Breast epithelium (tissue), 4 donors: ENCODE measurements at regions of chr9 and their contacts with region 1.

Region 1: DNA sequence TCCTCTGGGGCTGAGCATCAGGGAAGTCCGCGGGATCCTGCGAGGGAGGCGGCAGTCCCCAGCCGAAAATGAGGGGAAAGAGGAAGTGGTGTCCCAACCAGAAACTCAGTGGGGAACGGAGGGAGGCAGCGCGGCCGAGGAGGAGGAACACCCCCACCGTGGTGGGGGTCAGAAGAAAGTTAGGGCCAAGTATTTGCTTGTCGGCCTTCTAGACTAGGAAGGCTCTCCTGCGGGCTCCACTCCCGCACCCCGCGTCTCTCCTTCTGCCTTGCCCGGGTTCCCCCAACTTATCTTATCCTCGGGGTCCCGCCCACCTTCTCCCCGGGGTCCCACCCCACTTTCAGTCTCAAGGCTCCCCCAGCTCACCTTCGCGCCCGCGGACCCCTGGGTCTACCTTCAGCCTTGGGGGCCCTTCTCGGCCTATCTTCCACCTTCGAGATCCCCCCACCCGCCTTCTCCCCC is 557 bp upstream of the PHF2 start:
- DNase-seq: peak in 1 of 2 donors; percentile 50
- H3K4me3 ChIP-seq: peak overlapping the region; percentile 81 to 99 (median 90)
- H3K27ac ChIP-seq: peak overlapping the region; percentile 96 to 99
- H3K4me1 ChIP-seq: peaks cover 3 to 13% of the 10 kb centered on the region in 2 donors
- H3K27me3 ChIP-seq: no peaks in the 10 kb centered on the region
- CTCF ChIP-seq: no peak
- POLR2A ChIP-seq: no peak

Region 2: DNA sequence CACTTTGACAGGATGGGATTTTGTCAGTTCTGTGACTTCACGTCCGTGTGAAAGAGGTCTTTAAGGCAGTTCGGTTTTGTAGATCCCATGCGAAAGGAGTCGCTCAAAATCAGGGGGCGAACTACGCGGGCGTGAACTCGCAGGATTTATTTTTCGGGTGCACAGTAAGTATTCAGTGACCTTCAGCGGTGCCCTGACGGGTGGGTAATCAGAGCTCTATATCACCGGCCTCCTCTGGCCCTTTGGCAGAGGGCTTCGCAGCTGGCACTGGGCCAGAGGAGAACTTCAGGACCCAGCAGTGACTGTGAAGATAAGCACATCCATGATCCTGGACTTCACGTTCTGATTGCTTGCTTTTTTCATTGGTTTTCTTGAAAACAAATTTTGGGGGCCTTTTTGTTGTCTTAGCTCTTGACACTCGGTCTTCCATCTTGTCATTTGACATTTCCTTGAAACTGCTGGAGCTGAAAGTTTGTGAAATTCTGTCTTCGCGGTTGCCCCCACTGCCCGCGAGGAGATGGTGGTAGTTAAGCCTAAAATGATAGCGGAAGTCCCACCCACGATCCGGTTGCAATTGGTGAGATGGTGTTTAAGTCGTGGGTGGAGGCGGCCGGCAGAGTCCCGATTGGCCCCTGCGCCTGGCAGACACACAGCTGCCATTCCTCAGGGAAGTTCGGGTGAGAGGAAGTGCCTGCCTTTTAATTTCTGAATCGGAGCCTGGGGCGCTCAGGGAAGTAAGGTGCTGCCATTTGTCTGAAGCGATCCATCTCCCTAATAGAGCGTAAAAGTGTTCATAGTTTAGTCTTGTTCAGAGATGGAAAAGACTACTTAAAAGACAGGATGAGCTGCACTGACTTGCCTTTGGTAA is 122.5 kb before region 1 on chr9 and contains the start of gene FAM120AOS:
- intact Hi-C with region 1: loop called (anchors 10 kb)
- DNase-seq: peak; percentile 92 to 95
- H3K4me3 ChIP-seq: peak within 1 kb of the TSS; percentile 88 to 98 (median 92)
- H3K27ac ChIP-seq: peak within 1 kb of the TSS; percentile 90 to 99
- H3K4me1 ChIP-seq: peaks cover 0 to 14% of the 10 kb centered on the region in 2 donors
- H3K27me3 ChIP-seq: no peaks in the 10 kb centered on the region
- CTCF ChIP-seq: no peak
- POLR2A ChIP-seq: peak; percentile 28
- total RNA-seq, gene FAM120AOS: 60.3 to 70.4 (median 62.9) TPM